Activated CD4-positive, alpha-beta T cell treated with anti-CD3 and anti-CD28 coated beads for 36 hours (primary cell): ENCODE measurements at regions of chr1 and their contacts with region 1.

Region 1: DNA sequence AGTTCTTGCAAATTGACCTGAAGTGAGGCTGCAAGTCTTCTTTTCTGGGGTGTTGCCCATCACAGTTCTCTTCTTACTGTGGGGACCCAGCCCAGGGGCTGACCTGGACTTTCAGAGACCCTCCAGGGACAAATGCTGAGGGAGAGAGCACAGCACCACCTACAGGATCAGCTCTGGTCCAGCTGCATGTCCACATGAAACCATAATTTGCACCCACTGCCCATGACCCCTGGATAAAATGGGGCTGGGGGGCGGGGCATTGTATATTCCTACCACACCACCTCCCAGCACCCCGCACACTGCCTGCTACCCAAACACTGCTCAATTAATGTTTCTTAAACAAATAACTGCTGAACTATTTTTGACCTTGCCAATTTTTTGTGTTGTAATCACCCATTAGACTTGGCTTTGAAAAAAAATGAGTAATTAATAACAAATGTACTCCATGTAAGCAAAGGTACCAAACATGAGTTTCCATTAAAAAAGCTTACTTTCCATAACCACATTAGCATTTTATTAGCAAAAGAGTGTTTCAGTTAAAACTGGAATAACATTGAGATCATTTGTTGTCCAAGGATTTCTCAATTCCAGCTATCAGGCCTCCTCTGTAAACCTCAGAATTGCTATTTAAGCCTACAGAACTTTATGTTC is 168.0 kb upstream of the RAB4A start:
- DNase-seq: no peak
- ATAC-seq: no peak
- H3K4me3 Mint-ChIP-seq: no peak overlapping the region
- H3K27ac Mint-ChIP-seq: no peak overlapping the region
- H3K4me1 Mint-ChIP-seq: peaks cover 7% of the 10 kb centered on the region
- H3K27me3 Mint-ChIP-seq: peaks cover 2% of the 10 kb centered on the region

Region 2: DNA sequence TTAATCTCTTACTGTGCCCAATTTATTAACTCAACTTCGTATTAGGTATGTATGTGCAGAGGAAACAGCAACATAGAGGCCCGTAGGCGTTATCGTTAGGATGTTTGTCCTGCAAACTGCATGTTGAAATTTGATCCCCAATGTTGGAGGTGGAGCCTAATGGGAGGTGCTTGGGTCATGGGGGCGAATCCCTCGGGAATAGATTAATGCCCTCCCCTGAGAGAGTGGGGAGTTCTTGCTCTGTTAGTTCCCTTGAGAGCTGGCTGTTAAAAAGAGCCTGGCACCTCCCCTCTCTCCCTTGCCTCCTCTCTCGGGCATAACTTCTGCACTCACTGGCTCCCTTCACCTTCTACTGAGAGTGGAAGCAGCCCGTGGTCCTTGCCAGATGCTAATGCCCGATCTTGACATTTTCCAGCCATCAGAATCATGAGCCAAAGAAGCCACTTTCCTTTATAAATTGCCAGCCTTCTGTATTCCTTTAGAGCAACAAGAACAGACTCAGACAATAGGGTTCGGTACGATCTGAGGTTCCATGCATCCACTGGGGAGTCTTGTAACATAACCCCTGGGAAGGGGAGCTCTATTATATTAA is 19.1 kb after region 1 on chr1:
- CTCF ChIA-PET with region 1: no interaction called
- POLR2A ChIA-PET with region 1: no interaction called
- intact Hi-C with region 1: loop called in 1 of 2 experiments (anchors 2 kb)
- DNase-seq: no peak
- ATAC-seq: no peak
- H3K4me3 Mint-ChIP-seq: no peak overlapping the region
- H3K27ac Mint-ChIP-seq: no peak overlapping the region
- H3K4me1 Mint-ChIP-seq: peaks cover 8% of the 10 kb centered on the region
- H3K27me3 Mint-ChIP-seq: no peaks in the 10 kb centered on the region